ENCODE measurements at regions of chr2 and their contacts with region 1.

Region 1: GRCh38 chr2:42132966-42133641 is 36.0 kb upstream of the EML4 start:
- H3K4me3 ChIP-seq: peak overlapping the region; percentile 23
- H3K27ac ChIP-seq: peak overlapping the region; percentile 82
- H3K4me1 ChIP-seq: peaks cover 42% of the 10 kb centered on the region
- CTCF ChIP-seq: 0 out of 2 replicates have a peak, but pooled peaks have one; percentile 16

Region 2: DNA sequence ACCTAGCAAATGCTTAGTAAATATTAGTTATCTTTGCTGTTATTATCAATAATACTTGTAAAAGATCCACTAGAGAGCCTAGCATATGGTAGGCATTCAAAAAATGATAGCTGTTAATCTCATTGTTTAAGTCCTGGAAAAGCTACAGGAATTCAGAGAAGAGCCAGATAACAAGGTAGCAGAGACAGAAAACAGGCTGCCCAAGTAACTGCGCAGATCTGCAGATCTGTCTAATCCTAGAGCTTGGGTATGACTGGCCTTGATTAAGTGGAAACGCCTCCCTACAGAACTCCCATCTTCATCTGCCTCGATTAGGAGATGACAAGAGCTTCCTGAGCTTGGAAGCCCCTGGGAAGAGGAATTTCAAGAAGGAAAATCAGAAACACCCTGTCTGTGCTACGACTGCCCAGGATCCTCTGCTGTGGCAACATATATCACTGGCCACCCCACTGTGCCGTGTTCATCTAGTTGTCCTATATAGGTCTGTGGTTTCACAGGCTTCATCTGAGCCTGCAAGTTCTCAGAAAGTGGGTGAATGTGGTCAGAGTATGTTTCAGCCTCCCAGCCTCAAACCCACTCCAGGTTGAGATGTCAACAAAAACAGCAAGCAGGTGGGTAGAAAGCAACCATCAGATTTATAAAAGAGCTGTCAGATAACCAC is 236.8 kb before region 1 on chr2:
- CTCF ChIA-PET with region 1: no interaction called
- POLR2A ChIA-PET with region 1: no interaction called
- H3K4me3 ChIP-seq: no peak overlapping the region
- H3K27ac ChIP-seq: no peak overlapping the region
- H3K4me1 ChIP-seq: no peaks in the 10 kb centered on the region
- CTCF ChIP-seq: no peak

Region 3: GRCh38 chr2:42079737-42080287 is 53.3 kb before region 1 on chr2:
- CTCF ChIA-PET with region 1: no interaction called
- POLR2A ChIA-PET with region 1: no interaction called
- H3K4me3 ChIP-seq: no peak overlapping the region
- H3K27ac ChIP-seq: no peak overlapping the region
- H3K4me1 ChIP-seq: peaks cover 9% of the 10 kb centered on the region
- CTCF ChIP-seq: no peak

Region 4: GRCh38 chr2:42105330-42106256 is 27.5 kb before region 1 on chr2:
- CTCF ChIA-PET with region 1: no interaction called
- POLR2A ChIA-PET with region 1: interaction called, 11 read pairs
- H3K4me3 ChIP-seq: no peak overlapping the region
- H3K27ac ChIP-seq: no peak overlapping the region
- H3K4me1 ChIP-seq: no peaks in the 10 kb centered on the region
- CTCF ChIP-seq: no peak

Region 5: GRCh38 chr2:42360890-42361727 is 228.0 kb after region 1 on chr2 and contains the start of gene COX7A2L:
- CTCF ChIA-PET with region 1: no interaction called
- POLR2A ChIA-PET with region 1: interaction called, 10 read pairs
- H3K4me3 ChIP-seq: peak within 1 kb of the TSS; percentile 88
- H3K27ac ChIP-seq: peak within 1 kb of the TSS; percentile 85
- H3K4me1 ChIP-seq: 0 out of 2 replicates have a peak, but pooled peaks cover 5% of the 10 kb centered on the region
- CTCF ChIP-seq: peak; percentile 63; the same call in 1 of the 2 replicates

Measured in HEK293 (cell line).